ENCODE measurements at regions of chr14 and their contacts with region 1.

Region 1: GRCh38 chr14:74608959-74609611 is 3.0 kb downstream of the LTBP2 start:
- DNase-seq: peak; percentile 92
- ATAC-seq: peak; percentile 40
- H3K4me3 ChIP-seq: no peak overlapping the region
- H3K27ac ChIP-seq: no peak overlapping the region
- H3K4me1 ChIP-seq: peaks cover 16% of the 10 kb centered on the region; the same call in 1 of the 2 replicates
- H3K27me3 ChIP-seq: no peaks in the 10 kb centered on the region
- CTCF ChIP-seq: peak; percentile 97

Region 2: GRCh38 chr14:74444866-74445265 is 164.2 kb before region 1 on chr14:
- CTCF ChIA-PET with region 1: no interaction called
- POLR2A ChIA-PET with region 1: no interaction called
- intact Hi-C with region 1: no loop called
- DNase-seq: no peak
- ATAC-seq: 0 out of 2 replicates have a peak, but pooled peaks have one; percentile 18
- H3K4me3 ChIP-seq: no peak overlapping the region
- H3K27ac ChIP-seq: no peak overlapping the region
- H3K4me1 ChIP-seq: no peaks in the 10 kb centered on the region
- H3K27me3 ChIP-seq: peaks cover 42% of the 10 kb centered on the region
- CTCF ChIP-seq: no peak

Region 3: GRCh38 chr14:74488786-74489397 is 120.2 kb before region 1 on chr14:
- CTCF ChIA-PET with region 1: no interaction called
- POLR2A ChIA-PET with region 1: no interaction called
- intact Hi-C with region 1: no loop called
- DNase-seq: peak; percentile 93
- ATAC-seq: peak; percentile 5
- H3K4me3 ChIP-seq: peak overlapping the region; percentile 29; the same call in 1 of the 2 replicates
- H3K27ac ChIP-seq: peak overlapping the region; percentile 48
- H3K4me1 ChIP-seq: peaks cover 52% of the 10 kb centered on the region
- H3K27me3 ChIP-seq: no peaks in the 10 kb centered on the region
- CTCF ChIP-seq: no peak

Region 4: DNA sequence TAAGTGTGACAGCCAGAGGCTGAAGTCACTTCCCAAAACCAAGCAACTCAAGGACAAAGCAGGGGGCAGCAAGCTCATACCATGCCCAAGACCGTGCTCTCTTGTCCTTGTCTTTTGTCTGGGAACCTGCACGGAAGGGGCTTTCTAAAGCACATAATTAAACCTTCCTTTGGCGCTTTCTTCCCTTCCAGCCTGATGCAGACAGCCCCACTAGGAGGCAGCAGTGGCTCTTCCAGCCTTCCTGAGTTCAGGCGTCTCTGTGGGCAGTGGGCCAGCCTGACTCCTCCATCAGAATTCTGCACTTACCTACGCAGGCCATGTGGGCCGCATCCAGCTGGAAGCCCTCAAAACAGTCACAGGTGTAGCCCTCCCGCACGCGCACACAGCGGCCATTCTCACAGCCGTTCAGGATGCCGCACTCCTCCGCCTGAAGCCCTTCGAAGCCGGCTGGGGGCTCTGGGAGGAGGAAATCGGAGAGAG is 107.9 kb before region 1 on chr14:
- CTCF ChIA-PET with region 1: interaction called, 8 read pairs
- POLR2A ChIA-PET with region 1: no interaction called
- intact Hi-C with region 1: loop called (anchors 1 kb)
- DNase-seq: peak; percentile 85
- ATAC-seq: peak; percentile 76
- H3K4me3 ChIP-seq: no peak overlapping the region
- H3K27ac ChIP-seq: no peak overlapping the region
- H3K4me1 ChIP-seq: no peaks in the 10 kb centered on the region
- H3K27me3 ChIP-seq: no peaks in the 10 kb centered on the region
- CTCF ChIP-seq: peak; percentile 87

Region 5: GRCh38 chr14:74549588-74549987 is 59.5 kb before region 1 on chr14:
- CTCF ChIA-PET with region 1: no interaction called
- POLR2A ChIA-PET with region 1: no interaction called
- intact Hi-C with region 1: loop called (anchors 2 kb)
- DNase-seq: peak; percentile 71
- ATAC-seq: peak; percentile 98
- H3K4me3 ChIP-seq: no peak overlapping the region
- H3K27ac ChIP-seq: no peak overlapping the region
- H3K4me1 ChIP-seq: peaks cover 14% of the 10 kb centered on the region
- H3K27me3 ChIP-seq: no peaks in the 10 kb centered on the region
- CTCF ChIP-seq: peak; percentile 74

Region 6: DNA sequence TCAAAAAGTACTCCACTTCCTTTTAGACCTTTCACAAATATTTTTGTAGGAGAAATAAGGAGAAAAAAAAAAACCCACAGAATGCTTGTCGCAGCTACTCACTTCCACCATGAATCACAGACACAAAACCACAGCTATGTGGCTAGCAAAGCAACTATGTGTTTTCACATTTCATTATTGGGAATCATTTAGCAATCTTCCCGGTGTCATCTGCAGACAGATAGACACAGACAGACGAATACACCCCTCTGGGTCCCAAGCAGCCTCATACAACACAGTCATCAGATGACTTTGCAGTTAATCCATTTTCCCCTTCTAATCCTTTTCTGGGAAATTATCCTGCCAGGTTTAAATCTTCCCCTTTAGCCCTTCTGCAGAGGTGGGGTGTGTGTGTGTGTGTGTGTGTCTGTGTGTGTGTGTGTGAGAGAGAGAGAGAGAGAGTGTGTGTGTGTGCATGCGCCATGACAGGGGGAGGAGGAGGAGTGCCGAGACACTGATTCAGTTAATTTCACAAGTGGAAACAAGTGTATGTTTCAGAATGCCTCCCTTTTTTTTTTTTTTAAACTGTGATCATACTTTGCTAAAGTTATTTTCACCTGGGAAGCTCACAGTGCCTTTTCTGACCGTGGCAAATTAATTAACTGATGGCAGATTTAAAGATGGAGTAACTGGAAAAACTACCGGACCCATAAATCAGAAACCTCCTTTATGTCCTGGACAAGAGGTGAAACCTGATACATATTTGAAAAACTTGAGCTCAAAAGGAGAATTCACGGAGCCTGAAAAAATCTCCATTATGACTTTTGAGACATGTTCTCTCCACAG is 37.0 kb before region 1 on chr14:
- CTCF ChIA-PET with region 1: interaction called, 11 read pairs
- POLR2A ChIA-PET with region 1: interaction called, 4 read pairs
- intact Hi-C with region 1: loop called (anchors 2 kb)
- DNase-seq: peak; percentile 97
- ATAC-seq: peak; percentile 80
- H3K4me3 ChIP-seq: peak overlapping the region; percentile 57
- H3K27ac ChIP-seq: peak overlapping the region; percentile 98
- H3K4me1 ChIP-seq: peaks cover 69% of the 10 kb centered on the region
- H3K27me3 ChIP-seq: no peaks in the 10 kb centered on the region
- CTCF ChIP-seq: no peak

Region 7: GRCh38 chr14:74804219-74804826 is 195.2 kb after region 1 on chr14:
- CTCF ChIA-PET with region 1: interaction called, 27 read pairs
- POLR2A ChIA-PET with region 1: interaction called, 8 read pairs
- intact Hi-C with region 1: loop called (anchors 1 kb)
- DNase-seq: peak; percentile 64
- ATAC-seq: peak; percentile 71
- H3K4me3 ChIP-seq: no peak overlapping the region
- H3K27ac ChIP-seq: no peak overlapping the region
- H3K4me1 ChIP-seq: no peaks in the 10 kb centered on the region
- H3K27me3 ChIP-seq: no peaks in the 10 kb centered on the region
- CTCF ChIP-seq: peak; percentile 81

Region 8: DNA sequence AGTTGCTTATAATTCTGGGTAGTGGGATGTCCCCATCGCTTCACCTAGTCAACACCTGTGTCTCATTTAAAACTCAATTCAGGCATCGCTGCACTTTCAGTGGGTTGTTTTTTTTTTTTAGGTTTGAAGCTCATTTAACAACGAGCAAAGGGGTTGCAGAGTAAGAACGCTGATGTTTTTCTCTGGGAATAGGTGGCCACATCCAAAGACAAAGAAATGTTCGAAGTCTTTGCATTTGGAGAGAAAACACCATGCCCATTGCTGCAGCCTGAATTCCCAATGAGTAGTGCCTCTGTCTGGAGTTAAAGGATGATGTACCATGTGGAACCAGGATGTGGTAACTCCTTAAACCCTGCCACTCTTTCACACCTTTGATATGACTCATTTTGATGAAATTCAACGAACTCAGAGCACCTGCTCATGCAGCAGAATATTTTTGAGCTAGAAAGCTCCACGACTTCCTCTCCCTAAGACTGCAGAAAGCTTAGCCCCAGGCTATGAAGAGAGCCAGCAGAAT is 878.1 kb after region 1 on chr14:
- CTCF ChIA-PET with region 1: no interaction called
- POLR2A ChIA-PET with region 1: no interaction called
- intact Hi-C with region 1: no loop called
- DNase-seq: peak; percentile 55
- ATAC-seq: peak; percentile 18; the same call in 1 of the 2 replicates
- H3K4me3 ChIP-seq: no peak overlapping the region
- H3K27ac ChIP-seq: no peak overlapping the region
- H3K4me1 ChIP-seq: peaks cover 3% of the 10 kb centered on the region; the same call in 1 of the 2 replicates
- H3K27me3 ChIP-seq: no peaks in the 10 kb centered on the region
- CTCF ChIP-seq: no peak

Measured in PC-3 (cell line).